ENCODE measurements at regions of chr19 and their contacts with region 1.

Region 1: DNA sequence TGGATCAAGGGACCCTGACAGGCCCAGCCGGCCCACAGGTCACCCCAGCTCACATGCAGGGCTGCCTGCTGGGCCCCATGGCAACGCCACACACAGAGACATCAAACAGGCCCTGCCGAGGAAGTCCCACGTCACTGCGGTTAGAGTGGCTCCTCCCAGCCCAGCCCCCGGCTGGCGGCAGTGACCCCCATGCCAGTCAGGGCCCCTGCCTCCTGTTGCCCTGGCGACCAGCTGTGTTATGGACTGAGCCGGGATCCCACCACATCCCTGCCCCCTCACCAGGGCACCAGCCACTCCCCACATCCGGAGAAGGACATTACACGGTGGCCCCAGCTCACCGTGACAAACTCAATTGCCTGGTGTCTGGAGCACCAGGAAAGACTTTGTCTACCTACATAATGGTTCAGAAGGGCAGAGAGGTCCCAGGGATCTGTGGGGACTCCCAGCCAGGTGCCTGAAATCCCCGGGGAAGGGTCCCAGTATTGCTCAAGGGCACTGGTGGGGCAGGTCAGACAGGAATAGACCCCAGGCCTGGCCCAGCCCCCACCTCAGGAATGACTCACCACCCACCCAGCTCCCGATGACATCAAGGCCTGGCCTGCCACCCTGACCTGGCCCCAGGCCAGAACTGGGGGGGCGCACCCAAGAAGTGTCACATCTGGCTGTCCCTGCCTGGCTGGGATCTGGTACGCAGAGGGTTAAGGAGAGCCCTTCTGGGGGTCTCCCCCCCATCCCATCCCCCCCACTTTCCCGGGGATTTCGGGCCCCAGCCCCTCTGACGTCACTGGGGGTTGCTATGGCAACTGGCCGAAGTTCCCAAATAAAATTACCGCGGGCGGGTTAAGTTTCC is 30.2 kb upstream of the NANOS3 start:
- DNase-seq: peak; percentile 89
- ATAC-seq: peak; percentile 33
- H3K4me3 Mint-ChIP-seq: peak overlapping the region; percentile 64
- H3K27ac Mint-ChIP-seq: peak overlapping the region; percentile 98
- H3K4me1 Mint-ChIP-seq: peaks cover 40% of the 10 kb centered on the region
- H3K27me3 Mint-ChIP-seq: no peaks in the 10 kb centered on the region; the same call in 1 of the 2 replicates
- CTCF ChIP-seq: no peak

Region 2: DNA sequence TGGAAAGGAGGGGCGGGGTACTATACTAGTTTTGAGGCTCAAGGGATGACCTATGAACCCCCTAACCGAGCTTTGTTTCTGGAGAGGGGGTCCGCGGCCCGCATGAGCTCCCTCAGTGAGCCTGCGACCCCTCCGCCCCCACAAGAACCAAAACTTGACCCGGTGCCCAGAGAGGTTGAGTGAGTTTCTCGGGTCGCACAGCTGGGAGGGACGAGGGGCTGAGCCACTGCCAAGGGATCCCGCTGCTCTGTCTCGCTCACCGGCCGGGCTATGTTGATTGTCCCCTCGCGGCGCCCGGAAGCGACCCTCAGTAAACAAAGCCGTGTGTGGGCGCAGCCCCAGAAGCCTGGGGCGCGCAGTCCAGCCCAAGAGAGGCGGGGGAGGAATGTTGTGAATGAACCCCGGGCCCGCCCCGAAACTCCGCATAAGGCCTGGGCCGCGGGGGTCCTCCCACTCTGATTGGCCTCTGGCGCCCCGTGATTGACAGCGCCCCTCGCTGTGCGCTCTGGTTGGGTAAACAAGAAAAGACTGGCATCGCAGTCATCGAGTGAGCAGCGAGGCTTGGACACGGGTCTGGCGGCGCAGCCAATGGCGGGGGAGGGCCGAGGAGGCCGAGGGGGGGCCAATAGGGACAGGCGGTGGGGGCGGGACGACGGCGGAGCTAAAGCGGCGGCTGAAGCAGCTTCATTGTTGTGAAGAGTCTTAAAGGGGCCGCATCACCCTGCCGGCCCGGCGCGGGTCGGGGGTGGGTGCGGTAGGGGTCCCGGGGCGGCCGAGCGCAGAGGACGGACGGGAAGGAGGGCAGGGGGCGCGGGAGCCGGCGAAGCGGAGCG is 51.8 kb before region 1 on chr19 and contains the start of gene ZSWIM4:
- CTCF ChIA-PET with region 1: interaction called, 4 read pairs
- POLR2A ChIA-PET with region 1: interaction called, 13 read pairs
- DNase-seq: peak; percentile 100
- ATAC-seq: peak; percentile 91
- H3K4me3 Mint-ChIP-seq: peak within 1 kb of the TSS; percentile 92
- H3K27ac Mint-ChIP-seq: peak within 1 kb of the TSS; percentile 98
- H3K4me1 Mint-ChIP-seq: peaks cover 16% of the 10 kb centered on the region
- H3K27me3 Mint-ChIP-seq: no peaks in the 10 kb centered on the region
- CTCF ChIP-seq: no peak
- total RNA-seq, gene ZSWIM4: 33.4 to 35.5 TPM (median 34.2 TPM) in 3 replicates

Region 3: GRCh38 chr19:13817615-13818371 is 29.0 kb before region 1 on chr19:
- CTCF ChIA-PET with region 1: interaction called, 7 read pairs
- POLR2A ChIA-PET with region 1: interaction called, 17 read pairs
- DNase-seq: peak; percentile 97
- ATAC-seq: peak; percentile 78
- H3K4me3 Mint-ChIP-seq: peak overlapping the region; percentile 73
- H3K27ac Mint-ChIP-seq: peak overlapping the region; percentile 98
- H3K4me1 Mint-ChIP-seq: 0 out of 2 replicates have a peak, but pooled peaks cover 3% of the 10 kb centered on the region
- H3K27me3 Mint-ChIP-seq: no peaks in the 10 kb centered on the region
- CTCF ChIP-seq: no peak

Region 4: GRCh38 chr19:13825489-13826391 is 21.0 kb before region 1 on chr19:
- CTCF ChIA-PET with region 1: interaction called, 5 read pairs
- POLR2A ChIA-PET with region 1: interaction called, 12 read pairs
- DNase-seq: peak; percentile 94
- ATAC-seq: peak; percentile 86
- H3K4me3 Mint-ChIP-seq: peak overlapping the region; percentile 37; the same call in 1 of the 2 replicates
- H3K27ac Mint-ChIP-seq: peak overlapping the region; percentile 92
- H3K4me1 Mint-ChIP-seq: peaks cover 15% of the 10 kb centered on the region
- H3K27me3 Mint-ChIP-seq: no peaks in the 10 kb centered on the region
- CTCF ChIP-seq: 0 out of 2 replicates have a peak, but pooled peaks have one; percentile 35

Region 5: DNA sequence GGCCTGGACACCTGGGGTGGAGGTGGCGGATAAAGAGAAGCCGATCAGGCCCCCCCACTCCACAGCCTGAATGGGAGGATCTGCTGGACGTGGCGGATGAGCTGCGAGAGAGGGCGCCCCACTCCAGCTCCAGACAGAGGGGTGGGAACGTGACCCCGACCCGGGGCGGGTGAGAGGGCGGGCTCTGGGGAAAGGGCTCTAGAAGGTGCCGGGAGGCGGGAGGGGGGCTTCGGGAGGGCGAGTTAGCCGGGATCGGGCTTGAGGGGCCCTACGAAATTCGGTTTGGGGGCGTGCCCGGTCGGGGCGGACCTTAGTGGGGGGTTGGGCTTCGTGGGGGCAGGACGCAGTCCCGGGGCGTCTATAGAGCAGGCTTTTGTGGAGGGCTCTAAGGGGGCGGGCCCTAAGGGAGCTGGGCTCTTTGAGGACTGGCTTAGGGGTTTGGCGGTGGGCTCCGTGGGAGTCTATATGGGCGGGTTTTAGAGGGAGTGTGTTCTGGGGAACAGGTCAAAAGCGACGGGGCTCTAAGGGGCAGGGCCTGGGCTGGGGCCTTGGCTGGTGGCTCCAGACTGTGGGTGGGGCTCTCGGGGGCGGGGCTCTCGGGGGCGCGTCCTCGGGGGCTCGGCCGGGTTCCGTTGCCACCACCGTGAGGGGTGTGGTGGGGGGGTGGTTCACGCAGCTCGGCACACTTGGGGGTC is 26.1 kb after region 1 on chr19:
- CTCF ChIA-PET with region 1: interaction called, 5 read pairs
- POLR2A ChIA-PET with region 1: interaction called, 11 read pairs
- DNase-seq: peak; percentile 89
- ATAC-seq: peak; percentile 97
- H3K4me3 Mint-ChIP-seq: peak overlapping the region; percentile 56
- H3K27ac Mint-ChIP-seq: no peak overlapping the region
- H3K4me1 Mint-ChIP-seq: peaks cover 7% of the 10 kb centered on the region
- H3K27me3 Mint-ChIP-seq: peaks cover 98% of the 10 kb centered on the region
- CTCF ChIP-seq: no peak

Region 6: DNA sequence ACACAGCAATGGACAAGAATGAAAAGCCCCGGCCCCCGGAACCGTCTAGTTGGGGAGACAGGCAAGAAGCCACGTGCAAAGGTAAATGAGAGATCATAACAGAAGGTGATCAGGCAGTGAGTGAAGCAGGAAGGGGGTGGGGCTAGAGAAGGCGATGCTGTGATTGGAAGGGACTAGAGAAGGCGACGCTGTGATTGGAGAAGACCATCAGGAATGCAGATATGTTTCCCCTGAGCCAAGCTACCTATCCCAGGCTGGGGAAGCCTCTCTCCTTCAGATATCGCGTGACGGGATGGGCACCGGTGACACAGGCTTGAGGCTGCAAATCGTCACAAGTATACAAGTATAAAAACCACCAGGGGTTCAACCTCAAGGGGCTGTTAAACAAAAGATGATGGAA is 127.3 kb after region 1 on chr19:
- CTCF ChIA-PET with region 1: no interaction called
- POLR2A ChIA-PET with region 1: no interaction called
- DNase-seq: peak; percentile 84
- ATAC-seq: peak; percentile 75
- H3K4me3 Mint-ChIP-seq: peak overlapping the region; percentile 48
- H3K27ac Mint-ChIP-seq: peak overlapping the region; percentile 94
- H3K4me1 Mint-ChIP-seq: peaks cover 12% of the 10 kb centered on the region
- H3K27me3 Mint-ChIP-seq: no peaks in the 10 kb centered on the region
- CTCF ChIP-seq: no peak

Measured in WTC11 (cell line).